Activated naive CD4-positive, alpha-beta T cell treated with anti-CD3 and anti-CD28 coated beads for 36 hours (primary cell): ENCODE measurements at regions of chr22 and their contacts with region 1.

Region 1: GRCh38 chr22:50326959-50327710 is at the start of gene DENND6B:
- DNase-seq: peak; percentile 61
- H3K4me3 Mint-ChIP-seq: peak within 1 kb of the TSS; percentile 72
- H3K27ac Mint-ChIP-seq: no peak within 1 kb of the TSS
- H3K4me1 Mint-ChIP-seq: peaks cover 12% of the 10 kb centered on the region
- H3K27me3 Mint-ChIP-seq: no peaks in the 10 kb centered on the region
- total RNA-seq, gene DENND6B: 1.8 to 2.1 TPM

Region 2: GRCh38 chr22:50250555-50251476 is 76.3 kb before region 1 on chr22 and contains the start of gene HDAC10:
- CTCF ChIA-PET with region 1: interaction called, 13 read pairs
- intact Hi-C with region 1: loop called (anchors 2 kb)
- DNase-seq: peak; percentile 90
- H3K4me3 Mint-ChIP-seq: peak within 1 kb of the TSS; percentile 81
- H3K27ac Mint-ChIP-seq: no peak within 1 kb of the TSS
- H3K4me1 Mint-ChIP-seq: peaks cover 19% of the 10 kb centered on the region
- H3K27me3 Mint-ChIP-seq: no peaks in the 10 kb centered on the region
- total RNA-seq, gene HDAC10: 35.4 to 38.0 TPM

Region 3: DNA sequence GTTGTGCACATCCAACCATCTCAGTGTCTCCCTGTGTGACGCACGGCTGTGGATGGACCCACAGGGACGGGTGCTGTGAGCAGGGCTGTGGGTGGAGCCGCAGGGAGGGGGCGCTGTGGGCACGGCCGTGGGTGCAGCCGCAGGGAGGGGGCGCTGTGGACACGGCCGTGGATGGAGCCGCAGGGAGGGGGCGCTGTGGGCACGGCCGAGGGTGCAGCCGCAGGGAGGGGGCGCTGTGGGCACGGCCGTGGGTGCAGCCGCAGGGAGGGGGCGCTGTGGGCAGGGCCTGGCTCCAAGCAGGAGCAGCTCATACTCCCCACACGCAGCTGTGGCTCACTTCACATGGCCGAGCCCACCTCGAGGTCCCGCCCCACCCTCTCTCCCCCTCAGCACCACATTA is 51.0 kb before region 1 on chr22:
- CTCF ChIA-PET with region 1: interaction called, 31 read pairs
- intact Hi-C with region 1: loop called (anchors 1 kb)
- DNase-seq: peak; percentile 70
- H3K4me3 Mint-ChIP-seq: no peak overlapping the region
- H3K27ac Mint-ChIP-seq: no peak overlapping the region
- H3K4me1 Mint-ChIP-seq: no peaks in the 10 kb centered on the region
- H3K27me3 Mint-ChIP-seq: no peaks in the 10 kb centered on the region

Region 4: GRCh38 chr22:50341977-50342650 is 15.0 kb after region 1 on chr22:
- CTCF ChIA-PET with region 1: interaction called, 10 read pairs
- intact Hi-C with region 1: loop called (anchors 1 kb)
- DNase-seq: peak; percentile 94
- H3K4me3 Mint-ChIP-seq: peak overlapping the region; percentile 71
- H3K27ac Mint-ChIP-seq: peak overlapping the region; percentile 82
- H3K4me1 Mint-ChIP-seq: peaks cover 8% of the 10 kb centered on the region
- H3K27me3 Mint-ChIP-seq: no peaks in the 10 kb centered on the region

Region 5: GRCh38 chr22:50627642-50628542 is 300.8 kb after region 1 on chr22 and contains the start of gene ARSA:
- CTCF ChIA-PET with region 1: no interaction called
- intact Hi-C with region 1: no loop called
- DNase-seq: peak; percentile 81
- H3K4me3 Mint-ChIP-seq: peak within 1 kb of the TSS; percentile 84
- H3K27ac Mint-ChIP-seq: peak within 1 kb of the TSS; percentile 56
- H3K4me1 Mint-ChIP-seq: peaks cover 17% of the 10 kb centered on the region
- H3K27me3 Mint-ChIP-seq: no peaks in the 10 kb centered on the region
- total RNA-seq, gene ARSA: 17.8 to 19.2 TPM